Calu3 (cell line): ENCODE measurements at regions of chr20 and their contacts with region 1.

Region 1: GRCh38 chr20:8722276-8722928 is 346.5 kb upstream of the PLCB4 start:
- DNase-seq: peak; percentile 33
- H3K4me3 Mint-ChIP-seq: no peak overlapping the region
- H3K27ac Mint-ChIP-seq: no peak overlapping the region
- H3K4me1 Mint-ChIP-seq: no peaks in the 10 kb centered on the region
- H3K27me3 Mint-ChIP-seq: no peaks in the 10 kb centered on the region
- CTCF ChIP-seq: peak; percentile 45

Region 2: DNA sequence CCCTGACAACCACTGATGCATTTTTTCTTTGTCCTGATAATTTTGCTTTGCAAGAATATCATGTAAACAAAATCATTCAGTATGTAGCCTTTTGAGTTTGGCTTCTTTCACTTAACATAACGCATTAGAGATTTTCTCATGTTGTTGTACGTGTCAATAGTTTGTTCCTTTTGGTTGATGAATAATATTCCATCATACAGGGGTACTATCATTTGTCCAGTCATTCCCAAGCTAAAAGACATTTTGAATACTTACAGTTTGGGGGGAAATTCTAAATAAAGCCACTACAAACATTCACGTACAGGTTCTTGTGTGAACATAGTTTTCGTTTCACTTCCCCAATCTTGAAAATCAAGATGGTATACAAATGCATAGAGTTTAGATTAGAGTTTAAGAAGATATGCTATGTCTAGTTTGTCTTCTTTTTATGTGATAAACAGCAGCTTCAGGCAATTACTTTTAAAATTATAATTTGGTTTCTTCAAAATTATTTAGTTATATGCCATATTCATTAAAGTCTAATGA is 787.3 kb before region 1 on chr20:
- CTCF ChIA-PET with region 1: interaction called, 38 read pairs
- intact Hi-C with region 1: loop called (anchors 1 kb)
- DNase-seq: no peak
- H3K4me3 Mint-ChIP-seq: no peak overlapping the region
- H3K27ac Mint-ChIP-seq: no peak overlapping the region
- H3K4me1 Mint-ChIP-seq: no peaks in the 10 kb centered on the region
- H3K27me3 Mint-ChIP-seq: no peaks in the 10 kb centered on the region
- CTCF ChIP-seq: no peak

Region 3: DNA sequence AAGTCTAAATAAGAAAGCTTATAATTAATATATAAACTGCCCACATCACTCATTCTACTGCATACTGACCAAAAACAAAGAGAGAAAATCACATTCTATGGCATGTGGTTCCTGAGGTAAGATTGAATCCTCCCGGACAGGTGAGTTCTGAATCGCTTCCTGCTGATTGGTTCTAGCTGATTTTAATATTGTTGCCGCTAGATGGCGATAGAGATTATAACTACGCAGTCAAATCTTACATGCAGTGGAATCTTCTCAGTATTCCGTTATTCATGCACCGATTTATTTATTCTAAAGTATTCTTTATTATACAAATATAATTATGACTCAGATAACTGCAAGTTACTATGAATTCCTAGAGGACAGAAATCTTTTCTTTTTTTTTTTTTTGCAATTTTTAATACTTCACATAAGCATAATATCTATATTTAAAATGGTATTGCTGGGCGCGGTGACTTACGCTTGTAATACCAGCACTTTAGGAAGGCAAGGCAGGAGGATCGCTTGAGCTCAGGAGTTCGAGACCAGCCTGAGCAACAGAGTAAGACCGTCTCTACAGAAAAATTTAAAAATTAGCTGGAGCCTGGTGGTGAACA is 678.6 kb before region 1 on chr20:
- CTCF ChIA-PET with region 1: no interaction called
- intact Hi-C with region 1: loop called (anchors 2 kb)
- DNase-seq: peak; percentile 34
- H3K4me3 Mint-ChIP-seq: no peak overlapping the region
- H3K27ac Mint-ChIP-seq: no peak overlapping the region
- H3K4me1 Mint-ChIP-seq: peaks cover 7% of the 10 kb centered on the region
- H3K27me3 Mint-ChIP-seq: peaks cover 11% of the 10 kb centered on the region
- CTCF ChIP-seq: peak; percentile 50

Region 4: DNA sequence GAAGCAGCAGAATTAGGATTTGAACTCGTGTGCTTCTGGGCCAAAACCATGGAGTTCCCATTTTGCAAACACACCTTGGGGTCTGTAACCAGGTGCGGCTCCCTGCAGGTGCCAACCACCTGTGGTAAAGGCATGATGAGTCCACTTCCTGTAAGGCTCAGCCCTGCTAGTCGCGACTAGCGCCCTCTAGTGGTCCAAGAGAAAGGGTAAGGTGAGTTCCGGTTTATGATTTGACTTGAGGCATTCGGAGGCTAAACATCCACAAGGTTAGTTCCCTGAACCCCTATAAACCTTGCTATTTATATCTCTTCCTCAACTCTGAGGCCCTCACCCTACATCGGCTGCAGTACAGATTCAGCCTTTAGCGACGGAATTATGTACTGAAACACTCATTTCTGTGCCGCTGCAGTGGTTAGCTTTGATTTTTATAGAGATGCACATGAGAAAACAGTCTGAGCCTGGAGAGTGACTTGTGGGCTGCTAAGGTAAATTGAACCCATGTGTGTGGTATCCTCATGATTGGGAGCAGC is 416.9 kb before region 1 on chr20:
- CTCF ChIA-PET with region 1: no interaction called
- intact Hi-C with region 1: loop called (anchors 10 kb)
- DNase-seq: peak; percentile 47
- H3K4me3 Mint-ChIP-seq: no peak overlapping the region
- H3K27ac Mint-ChIP-seq: no peak overlapping the region
- H3K4me1 Mint-ChIP-seq: no peaks in the 10 kb centered on the region
- H3K27me3 Mint-ChIP-seq: no peaks in the 10 kb centered on the region
- CTCF ChIP-seq: peak; percentile 53

Region 5: DNA sequence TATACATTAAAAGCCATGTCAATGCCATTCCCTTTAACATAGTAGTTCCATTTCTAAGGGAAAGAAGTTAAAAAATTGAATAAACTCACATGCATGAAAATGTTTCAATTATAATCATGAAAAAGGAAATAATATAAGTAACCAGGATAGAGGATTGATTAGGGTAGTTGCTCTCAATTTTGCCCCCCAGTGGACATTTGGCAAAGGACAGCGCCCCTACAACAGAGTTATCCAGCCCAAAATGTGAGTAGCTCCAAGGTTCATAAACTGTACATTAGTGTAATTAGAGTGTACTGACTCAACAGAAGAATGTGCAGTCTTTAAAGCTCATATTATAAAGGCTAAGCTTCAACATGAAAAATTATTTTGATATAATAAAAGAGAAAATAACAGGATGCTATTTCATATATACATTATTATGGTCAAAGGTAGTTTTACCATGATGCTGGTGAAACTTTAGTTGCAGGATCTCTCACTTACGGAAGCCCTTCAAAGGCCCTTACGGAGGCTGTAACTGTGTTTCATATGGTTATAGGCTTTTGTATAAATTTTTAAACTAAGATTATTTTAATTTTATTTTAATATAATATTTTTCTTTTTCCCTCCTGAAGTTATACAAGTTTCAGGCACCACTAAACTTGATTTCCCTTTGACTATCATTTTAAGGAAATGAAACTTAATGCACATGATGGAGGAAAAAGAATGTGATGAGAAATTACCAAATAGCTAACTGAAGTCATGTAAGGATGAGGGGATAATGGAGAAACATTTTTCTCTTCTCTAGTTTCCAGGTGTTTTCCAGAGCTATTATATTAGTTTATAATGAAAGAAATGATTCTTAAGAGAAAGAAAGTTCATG is 186.8 kb before region 1 on chr20:
- CTCF ChIA-PET with region 1: interaction called, 6 read pairs
- intact Hi-C with region 1: loop called (anchors 5 kb)
- DNase-seq: peak; percentile 26
- H3K4me3 Mint-ChIP-seq: no peak overlapping the region
- H3K27ac Mint-ChIP-seq: no peak overlapping the region
- H3K4me1 Mint-ChIP-seq: no peaks in the 10 kb centered on the region
- H3K27me3 Mint-ChIP-seq: peaks cover 18% of the 10 kb centered on the region
- CTCF ChIP-seq: peak; percentile 51